Mammary epithelial cell (primary cell): ENCODE measurements at regions of chr10 and their contacts with region 1.

Region 1: DNA sequence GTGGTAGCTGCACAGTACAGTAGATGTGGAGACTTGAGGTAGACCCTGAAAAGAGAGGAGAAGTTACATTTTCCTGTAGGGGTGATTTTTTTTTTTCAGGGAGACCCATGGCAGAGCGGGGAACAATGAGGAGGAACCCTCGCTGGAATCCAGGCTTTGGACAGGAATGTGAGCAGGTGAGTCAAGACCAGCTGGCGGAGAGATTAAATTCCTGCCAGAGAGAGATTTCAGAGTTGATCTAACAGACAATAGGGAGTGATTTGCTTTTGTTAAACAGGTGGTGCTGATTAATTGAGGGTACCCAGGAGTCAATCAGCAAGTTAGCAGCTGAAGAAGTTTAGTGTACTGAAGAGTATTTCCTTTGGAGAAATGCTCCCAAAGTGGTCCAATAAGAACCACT is 41.6 kb upstream of the MINDY3 start:
- DNase-seq: no peak
- H3K4me3 ChIP-seq: no peak overlapping the region
- H3K27ac ChIP-seq: no peak overlapping the region
- H3K4me1 ChIP-seq: no peaks in the 10 kb centered on the region
- H3K27me3 ChIP-seq: no peaks in the 10 kb centered on the region
- CTCF ChIP-seq: no peak

Region 2: GRCh38 chr10:15879058-15879457 is 22.8 kb before region 1 on chr10:
- CTCF ChIA-PET with region 1: no interaction called
- dilution Hi-C with region 1: no loop called
- in situ Hi-C with region 1: no loop called
- intact Hi-C with region 1: loop called (anchors 2 kb)
- DNase-seq: no peak
- H3K4me3 ChIP-seq: no peak overlapping the region
- H3K27ac ChIP-seq: no peak overlapping the region
- H3K4me1 ChIP-seq: no peaks in the 10 kb centered on the region
- H3K27me3 ChIP-seq: no peaks in the 10 kb centered on the region
- CTCF ChIP-seq: peak; percentile 68 to 74

Region 3: DNA sequence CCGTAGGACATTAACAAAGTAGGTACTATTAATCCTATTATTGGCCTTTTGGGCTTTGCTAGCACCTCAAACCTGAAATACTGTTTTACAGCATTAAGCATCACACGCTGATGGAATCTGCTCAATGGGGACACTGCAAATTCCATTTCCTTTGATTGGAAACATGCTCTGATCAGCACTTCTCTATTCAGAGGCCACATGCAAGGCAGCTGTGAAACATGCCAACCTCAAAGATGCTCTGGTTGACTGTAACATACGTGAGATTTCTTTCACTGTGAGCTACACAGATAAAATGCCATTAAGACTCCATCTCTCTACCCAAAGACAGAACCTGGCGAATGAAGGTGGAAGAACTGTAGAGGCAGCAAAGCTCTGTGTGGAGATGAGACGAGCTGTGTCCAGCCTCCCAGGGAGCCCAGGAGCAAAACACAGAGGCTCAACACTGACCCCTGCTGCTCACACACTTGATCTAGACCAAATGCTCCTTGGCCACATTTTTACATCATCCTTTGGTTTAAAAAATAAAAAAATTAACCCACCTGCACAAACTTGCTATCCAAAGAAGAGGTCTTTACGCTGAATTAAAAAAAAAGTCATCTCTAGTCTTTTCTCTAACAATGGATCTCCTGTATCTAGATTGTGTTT is 907.3 kb after region 1 on chr10:
- CTCF ChIA-PET with region 1: no interaction called
- dilution Hi-C with region 1: no loop called
- in situ Hi-C with region 1: no loop called
- intact Hi-C with region 1: loop called (anchors 1 kb)
- DNase-seq: peak; percentile 21
- H3K4me3 ChIP-seq: no peak overlapping the region
- H3K27ac ChIP-seq: no peak overlapping the region
- H3K4me1 ChIP-seq: no peaks in the 10 kb centered on the region
- H3K27me3 ChIP-seq: no peaks in the 10 kb centered on the region
- CTCF ChIP-seq: peak; percentile 43 to 60